ENCODE measurements at regions of chr7 and their contacts with region 1.

Region 1: DNA sequence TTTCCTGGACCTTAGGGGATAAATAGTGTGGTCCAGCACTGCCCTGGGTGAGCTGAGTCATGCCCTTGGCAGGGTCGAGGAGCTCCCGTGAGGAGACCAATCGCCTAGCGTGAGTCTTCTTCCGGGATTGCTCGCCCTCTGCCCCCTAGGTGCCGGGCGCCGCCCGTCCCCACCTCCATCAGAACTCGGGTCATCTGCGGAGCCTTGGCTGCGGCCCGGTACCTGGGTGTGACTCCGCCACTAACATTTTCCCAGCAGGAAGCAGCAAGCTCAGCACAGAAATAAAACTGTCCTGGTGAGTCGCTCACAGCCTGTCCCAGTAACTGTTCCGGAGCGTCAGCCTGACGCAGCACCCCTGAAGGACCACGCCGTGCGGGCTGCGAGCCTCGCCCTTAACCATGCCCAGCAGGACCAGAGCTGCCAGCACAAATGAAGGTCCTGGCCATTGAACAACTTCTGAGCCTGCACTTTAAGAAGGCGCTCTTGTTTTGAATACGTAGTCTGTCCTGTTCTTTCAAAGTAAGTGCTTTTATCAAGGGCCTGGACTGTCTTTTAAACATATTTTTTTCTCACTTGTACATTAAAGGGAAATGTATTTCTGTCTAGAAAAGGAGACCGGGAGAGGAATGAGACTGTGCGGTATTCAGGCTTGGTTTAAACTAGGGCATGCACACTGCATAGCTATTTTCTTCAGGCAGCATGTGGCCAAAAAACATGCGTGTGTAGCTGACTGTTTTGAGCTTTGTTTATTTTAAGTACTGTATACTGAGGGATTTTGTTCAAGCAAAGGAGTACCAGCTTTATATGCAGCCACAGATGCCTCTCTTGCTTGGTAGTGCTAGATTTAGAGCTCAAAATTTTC is 136.7 kb downstream of the HECW1 start:
- DNase-seq: peak; percentile 77
- ATAC-seq: peak; percentile 85
- H3K4me3 ChIP-seq: peak overlapping the region; percentile 29
- H3K27ac ChIP-seq: peak overlapping the region; percentile 94
- H3K4me1 ChIP-seq: peaks cover 11% of the 10 kb centered on the region
- H3K27me3 ChIP-seq: no peaks in the 10 kb centered on the region
- CTCF ChIP-seq: no peak
- POLR2A ChIP-seq: 0 out of 2 replicates have a peak, but pooled peaks have one; percentile 21
- RAD21 ChIP-seq: no peak

Region 2: GRCh38 chr7:42522227-42522991 is 726.8 kb before region 1 on chr7:
- CTCF ChIA-PET with region 1: no interaction called
- POLR2A ChIA-PET with region 1: no interaction called
- dilution Hi-C with region 1: no loop called
- in situ Hi-C with region 1: no loop called
- intact Hi-C with region 1: no loop called
- DNase-seq: no peak
- ATAC-seq: no peak
- H3K4me3 ChIP-seq: no peak overlapping the region
- H3K27ac ChIP-seq: no peak overlapping the region
- H3K4me1 ChIP-seq: no peaks in the 10 kb centered on the region
- H3K27me3 ChIP-seq: no peaks in the 10 kb centered on the region
- CTCF ChIP-seq: no peak
- POLR2A ChIP-seq: no peak
- RAD21 ChIP-seq: no peak

Region 3: DNA sequence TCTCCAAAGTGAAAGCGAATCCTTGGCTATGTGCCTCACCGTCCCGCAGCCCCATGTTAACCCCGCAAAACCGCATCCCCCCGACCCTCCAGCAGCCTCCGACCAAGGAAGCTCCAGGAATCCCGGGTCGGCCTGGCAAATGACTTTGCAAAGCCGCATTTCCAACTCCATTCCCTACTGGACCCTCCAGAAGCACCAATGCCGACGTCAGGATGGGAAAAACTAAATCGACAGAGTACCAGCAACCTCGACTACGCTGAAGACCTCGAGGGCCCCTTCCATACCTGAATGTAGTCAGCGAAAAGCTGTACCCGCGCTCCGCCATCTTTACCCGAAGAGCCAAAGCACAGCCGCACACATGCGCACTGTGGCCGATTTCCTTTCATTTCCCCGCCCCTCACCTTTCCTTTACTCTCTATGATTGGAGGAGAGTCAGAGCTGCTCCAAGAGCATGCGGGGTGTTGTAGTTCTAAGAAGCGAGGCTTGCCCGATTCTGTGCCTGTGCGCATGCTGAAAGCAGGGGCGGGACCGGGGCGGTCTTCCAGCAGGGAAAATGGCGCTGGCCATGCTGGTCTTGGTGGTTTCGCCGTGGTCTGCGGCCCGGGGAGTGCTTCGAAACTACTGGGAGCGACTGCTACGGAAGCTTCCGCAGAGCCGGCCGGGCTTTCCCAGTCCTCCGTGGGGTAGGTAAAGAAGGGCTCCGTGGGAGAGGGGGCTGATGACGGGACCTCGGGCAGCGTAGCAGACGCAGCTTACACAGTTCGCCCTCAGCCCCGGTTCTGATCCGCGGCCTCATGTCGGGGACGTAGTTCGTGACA is 317.1 kb before region 1 on chr7 and contains the starts of genes MRPL32 and PSMA2:
- CTCF ChIA-PET with region 1: no interaction called
- POLR2A ChIA-PET with region 1: no interaction called
- dilution Hi-C with region 1: loop called (anchors 25 kb)
- in situ Hi-C with region 1: no loop called
- intact Hi-C with region 1: no loop called
- DNase-seq: peak; percentile 97
- ATAC-seq: peak; percentile 99
- H3K4me3 ChIP-seq: peak within 1 kb of the TSS; percentile 69
- H3K27ac ChIP-seq: peak within 1 kb of the TSS; percentile 83
- H3K4me1 ChIP-seq: peaks cover 4% of the 10 kb centered on the region
- H3K27me3 ChIP-seq: no peaks in the 10 kb centered on the region
- CTCF ChIP-seq: no peak
- POLR2A ChIP-seq: peak; percentile 81
- RAD21 ChIP-seq: no peak
- total RNA-seq, gene MRPL32: 42.3 and 56.7 TPM in 2 replicates
- total RNA-seq, gene PSMA2: 138 and 217 TPM in 2 replicates

Region 4: GRCh38 chr7:43119371-43120075 is 129.7 kb before region 1 on chr7:
- CTCF ChIA-PET with region 1: no interaction called
- POLR2A ChIA-PET with region 1: no interaction called
- dilution Hi-C with region 1: no loop called
- in situ Hi-C with region 1: no loop called
- intact Hi-C with region 1: loop called (anchors 5 kb)
- DNase-seq: peak; percentile 90
- ATAC-seq: peak; percentile 97
- H3K4me3 ChIP-seq: no peak overlapping the region
- H3K27ac ChIP-seq: peak overlapping the region; percentile 10
- H3K4me1 ChIP-seq: peaks cover 13% of the 10 kb centered on the region
- H3K27me3 ChIP-seq: peaks cover 10% of the 10 kb centered on the region
- CTCF ChIP-seq: no peak
- POLR2A ChIP-seq: no peak
- RAD21 ChIP-seq: no peak

Region 5: GRCh38 chr7:43314379-43315189 is 65.4 kb after region 1 on chr7:
- CTCF ChIA-PET with region 1: no interaction called
- POLR2A ChIA-PET with region 1: interaction called, 12 read pairs
- dilution Hi-C with region 1: no loop called
- in situ Hi-C with region 1: no loop called
- intact Hi-C with region 1: no loop called
- DNase-seq: no peak
- ATAC-seq: no peak
- H3K4me3 ChIP-seq: no peak overlapping the region
- H3K27ac ChIP-seq: no peak overlapping the region
- H3K4me1 ChIP-seq: no peaks in the 10 kb centered on the region
- H3K27me3 ChIP-seq: no peaks in the 10 kb centered on the region; the same call in 1 of the 2 replicates
- CTCF ChIP-seq: no peak
- POLR2A ChIP-seq: no peak
- RAD21 ChIP-seq: no peak

Measured in IMR-90 (cell line).